Thyroid gland (tissue), 4 donors: ENCODE measurements at regions of chr1 and their contacts with region 1.

Region 1: DNA sequence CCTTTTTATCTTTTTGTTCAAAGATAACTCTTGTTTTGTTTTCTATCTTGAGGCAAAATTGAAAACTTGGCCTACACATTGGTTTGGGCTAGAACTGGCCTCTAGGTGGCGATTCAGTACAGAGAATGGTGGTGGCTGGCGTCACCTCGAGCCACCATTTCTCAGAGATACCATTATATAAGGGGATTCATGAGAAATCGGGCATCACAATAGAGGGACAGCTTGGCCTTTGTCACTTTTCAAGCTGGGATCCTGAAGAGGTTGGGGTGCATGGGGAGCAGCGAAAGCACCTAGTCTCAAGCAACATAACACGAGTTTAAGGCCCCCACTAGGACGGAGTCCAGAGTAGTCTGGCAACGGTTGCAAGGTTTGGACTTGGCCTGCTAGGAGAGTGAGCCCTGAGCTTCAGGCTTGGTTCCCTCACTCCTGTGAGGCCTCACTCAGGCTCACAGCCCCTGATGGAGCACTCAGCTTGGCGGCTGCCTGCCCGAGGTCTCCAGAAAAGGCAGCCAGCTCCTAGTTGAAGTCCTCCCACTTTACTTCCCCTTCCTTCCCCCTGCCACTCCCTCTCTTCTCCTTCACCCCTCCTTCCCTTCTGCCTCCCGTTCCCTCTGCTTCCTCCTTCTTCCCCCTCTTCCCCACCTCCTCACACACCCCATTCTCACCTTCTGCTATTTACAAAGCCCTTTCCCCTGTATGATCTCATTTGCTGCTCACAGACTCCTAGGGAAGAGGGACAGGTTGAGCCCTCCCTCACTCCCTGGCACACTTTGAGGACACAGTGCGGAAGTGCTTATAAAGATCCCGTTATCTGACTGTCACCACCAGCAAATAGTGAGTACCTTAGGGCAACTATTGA is 67.8 kb downstream of the LRIG2 start:
- DNase-seq: peak; percentile 69 to 72
- H3K4me3 ChIP-seq: no peak overlapping the region
- H3K27ac ChIP-seq: peak overlapping the region; percentile 52 to 74 (median 66)
- H3K4me1 ChIP-seq: peaks cover 40 to 49% of the 10 kb centered on the region in 2 donors
- H3K27me3 ChIP-seq: no peaks in the 10 kb centered on the region
- CTCF ChIP-seq: peak; percentile 56 to 88 (median 82)
- POLR2A ChIP-seq: no peak

Region 2: DNA sequence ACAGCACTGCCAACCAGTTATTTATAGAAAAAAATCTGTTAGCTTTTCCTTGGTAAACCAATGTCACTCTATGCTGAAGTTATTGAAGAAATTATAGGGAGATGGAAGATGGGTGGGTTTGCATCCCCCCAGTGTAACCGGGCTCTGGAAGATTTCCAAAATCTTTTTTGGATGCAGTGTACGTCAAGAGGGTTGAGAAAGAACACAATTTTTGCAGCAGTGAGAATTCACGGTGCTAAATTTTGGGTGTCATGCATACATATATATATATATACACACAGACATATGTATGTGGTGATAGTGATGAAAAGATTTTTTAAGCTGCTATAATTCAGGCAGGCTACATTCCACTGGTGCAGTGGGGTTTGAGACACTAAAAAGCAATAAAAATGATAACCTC is 158.1 kb after region 1 on chr1:
- intact Hi-C with region 1: no loop called
- DNase-seq: no peak
- H3K4me3 ChIP-seq: no peak overlapping the region
- H3K27ac ChIP-seq: no peak overlapping the region
- H3K4me1 ChIP-seq: no peaks in the 10 kb centered on the region
- H3K27me3 ChIP-seq: no peaks in the 10 kb centered on the region
- CTCF ChIP-seq: no peak
- POLR2A ChIP-seq: no peak

Region 3: GRCh38 chr1:113677250-113678158 is 536.7 kb after region 1 on chr1:
- intact Hi-C with region 1: loop called (anchors 5 kb)
- DNase-seq: peak; percentile 65 to 74
- H3K4me3 ChIP-seq: no peak overlapping the region
- H3K27ac ChIP-seq: peak overlapping the region in 1 of 3 donors; percentile 42
- H3K4me1 ChIP-seq: peaks cover 4 to 13% of the 10 kb centered on the region in 2 donors
- H3K27me3 ChIP-seq: no peaks in the 10 kb centered on the region
- CTCF ChIP-seq: peak in 5 of 6 experiments; percentile 39 to 85 (median 55)
- POLR2A ChIP-seq: no peak